PC-9 (cell line): ENCODE measurements at regions of chr1 and their contacts with region 1.

Region 1: GRCh38 chr1:222946436-222946835 is 131.6 kb downstream of the DISP1 start:
- DNase-seq: no peak
- H3K4me3 ChIP-seq: no peak overlapping the region
- H3K27ac ChIP-seq: no peak overlapping the region
- H3K4me1 ChIP-seq: 0 out of 2 replicates have a peak, but pooled peaks cover 5% of the 10 kb centered on the region
- H3K27me3 ChIP-seq: no peaks in the 10 kb centered on the region
- CTCF ChIP-seq: no peak

Region 2: GRCh38 chr1:223707256-223708000 is 761.0 kb after region 1 on chr1:
- CTCF ChIA-PET with region 1: no interaction called
- POLR2A ChIA-PET with region 1: interaction called, 20 read pairs
- intact Hi-C with region 1: no loop called
- DNase-seq: peak; percentile 86 to 96
- H3K4me3 ChIP-seq: peak overlapping the region; percentile 45; the same call in 1 of the 2 replicates
- H3K27ac ChIP-seq: peak overlapping the region; percentile 96
- H3K4me1 ChIP-seq: peaks cover 94% of the 10 kb centered on the region
- H3K27me3 ChIP-seq: no peaks in the 10 kb centered on the region
- CTCF ChIP-seq: no peak